ENCODE measurements at regions of chr6 and their contacts with region 1.

Region 1: GRCh38 chr6:147506704-147507114 is 1.8 kb upstream of the SAMD5 start:
- DNase-seq: no peak
- H3K4me3 ChIP-seq: peak overlapping the region; percentile 72
- H3K27ac ChIP-seq: no peak overlapping the region
- H3K27me3 ChIP-seq: peaks cover 40% of the 10 kb centered on the region
- CTCF ChIP-seq: peak; percentile 89

Region 2: GRCh38 chr6:147970975-147971374 is 464.3 kb after region 1 on chr6:
- CTCF ChIA-PET with region 1: interaction called, 12 read pairs
- POLR2A ChIA-PET with region 1: no interaction called
- DNase-seq: no peak
- H3K4me3 ChIP-seq: no peak overlapping the region
- H3K27ac ChIP-seq: no peak overlapping the region
- H3K27me3 ChIP-seq: no peaks in the 10 kb centered on the region
- CTCF ChIP-seq: peak; percentile 24

Region 3: GRCh38 chr6:147986846-147987245 is 480.1 kb after region 1 on chr6:
- CTCF ChIA-PET with region 1: no interaction called
- POLR2A ChIA-PET with region 1: no interaction called
- DNase-seq: no peak
- H3K4me3 ChIP-seq: no peak overlapping the region
- H3K27ac ChIP-seq: no peak overlapping the region
- H3K27me3 ChIP-seq: peaks cover 3% of the 10 kb centered on the region
- CTCF ChIP-seq: no peak

Region 4: DNA sequence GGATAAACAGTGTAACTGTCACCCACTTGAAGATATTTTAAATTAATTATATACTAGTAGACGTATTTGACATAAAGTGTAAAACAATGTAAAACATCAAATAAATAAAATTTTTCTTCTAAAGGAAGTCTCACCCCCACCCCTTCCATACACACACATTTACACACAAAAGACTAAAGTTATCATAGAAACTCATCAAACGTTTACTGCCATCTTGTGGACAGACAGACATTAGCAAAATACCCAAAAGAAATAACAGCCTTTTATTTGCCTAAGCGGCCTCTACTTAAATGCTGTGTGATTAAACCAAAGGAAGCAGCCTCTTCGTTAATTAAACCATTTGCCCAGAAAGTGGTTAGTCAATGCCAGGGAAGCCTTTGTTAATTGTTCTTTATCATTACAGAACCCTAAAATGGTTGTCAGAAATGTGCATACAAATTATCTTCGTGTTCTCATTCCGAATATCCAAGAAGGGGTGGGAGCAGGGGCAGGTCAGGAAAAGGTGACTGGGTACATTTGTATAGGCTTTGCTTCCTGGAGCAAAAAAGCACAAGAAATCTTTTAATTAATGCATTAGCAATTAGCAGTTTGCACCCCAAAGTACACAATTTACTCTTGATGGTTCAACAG is 659.7 kb after region 1 on chr6:
- CTCF ChIA-PET with region 1: interaction called, 76 read pairs
- POLR2A ChIA-PET with region 1: no interaction called
- DNase-seq: peak; percentile 33
- H3K4me3 ChIP-seq: no peak overlapping the region
- H3K27ac ChIP-seq: no peak overlapping the region
- H3K27me3 ChIP-seq: no peaks in the 10 kb centered on the region
- CTCF ChIP-seq: peak; percentile 72